ENCODE measurements at regions of chr2 and their contacts with region 1.

Region 1: DNA sequence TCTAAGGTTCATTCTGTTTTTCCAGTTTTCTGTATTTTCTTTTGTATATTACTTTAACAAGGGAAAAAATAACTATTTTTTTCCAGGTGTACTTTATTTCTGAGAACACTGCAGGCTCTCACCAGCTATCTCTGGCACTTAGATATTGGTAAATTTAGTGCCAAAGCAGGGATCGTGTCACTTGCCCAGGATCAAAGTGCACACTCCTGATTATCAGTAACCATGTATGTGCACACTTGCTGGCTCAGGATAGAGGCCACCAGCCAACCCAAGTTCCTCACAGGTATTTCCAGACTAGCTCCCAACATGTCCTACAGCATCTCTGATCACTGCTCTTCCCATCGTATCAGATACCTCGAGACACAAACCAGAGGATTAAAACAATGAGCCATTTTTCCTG is 5.8 kb upstream of the FZD5 start:
- DNase-seq: no peak
- H3K4me3 ChIP-seq: no peak overlapping the region
- H3K4me3 Mint-ChIP-seq: no peak overlapping the region
- H3K27ac Mint-ChIP-seq: no peak overlapping the region
- H3K4me1 ChIP-seq: peaks cover 52% of the 10 kb centered on the region
- H3K4me1 Mint-ChIP-seq: peaks cover 38% of the 10 kb centered on the region
- H3K27me3 ChIP-seq: no peaks in the 10 kb centered on the region
- H3K27me3 Mint-ChIP-seq: no peaks in the 10 kb centered on the region
- CTCF ChIP-seq: no peak

Region 2: DNA sequence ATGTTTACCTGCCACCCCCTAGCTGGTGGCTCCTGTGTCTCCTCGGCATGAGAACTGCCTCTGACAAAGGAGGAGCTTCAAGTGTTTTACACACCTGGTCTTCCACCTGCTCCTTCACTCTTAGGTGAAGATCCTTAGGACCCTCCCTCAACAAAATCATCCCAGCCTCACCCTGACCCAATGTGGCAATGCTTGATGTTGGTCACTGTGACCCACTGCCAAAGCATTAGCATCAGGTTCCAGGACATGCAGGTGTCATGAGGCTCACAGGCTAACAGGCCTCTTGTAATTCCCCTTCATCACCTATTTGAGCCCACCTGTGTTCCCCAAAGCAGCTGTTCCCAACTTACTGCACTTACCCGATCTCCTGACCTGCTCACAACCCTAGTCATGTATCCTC is 15.6 kb before region 1 on chr2:
- CTCF ChIA-PET with region 1: no interaction called
- POLR2A ChIA-PET with region 1: interaction called, 11 read pairs
- intact Hi-C with region 1: no loop called
- DNase-seq: no peak
- H3K4me3 ChIP-seq: no peak overlapping the region
- H3K4me3 Mint-ChIP-seq: no peak overlapping the region
- H3K27ac Mint-ChIP-seq: peak overlapping the region; percentile 5
- H3K4me1 ChIP-seq: peaks cover 32% of the 10 kb centered on the region
- H3K4me1 Mint-ChIP-seq: peaks cover 33% of the 10 kb centered on the region
- H3K27me3 ChIP-seq: no peaks in the 10 kb centered on the region
- H3K27me3 Mint-ChIP-seq: no peaks in the 10 kb centered on the region
- CTCF ChIP-seq: no peak